Right cardiac atrium (tissue), 5 donors: ENCODE measurements at regions of chr1 and their contacts with region 1.

Region 1: GRCh38 chr1:151594143-151594625 is 17.7 kb upstream of the SNX27 start:
- DNase-seq: peak; percentile 68 to 91 (median 85)
- ATAC-seq: peak; percentile 50 to 73
- H3K4me3 ChIP-seq: no peak overlapping the region
- H3K27ac ChIP-seq: no peak overlapping the region
- H3K4me1 ChIP-seq: no peaks in the 10 kb centered on the region
- H3K27me3 ChIP-seq: no peaks in the 10 kb centered on the region

Region 2: DNA sequence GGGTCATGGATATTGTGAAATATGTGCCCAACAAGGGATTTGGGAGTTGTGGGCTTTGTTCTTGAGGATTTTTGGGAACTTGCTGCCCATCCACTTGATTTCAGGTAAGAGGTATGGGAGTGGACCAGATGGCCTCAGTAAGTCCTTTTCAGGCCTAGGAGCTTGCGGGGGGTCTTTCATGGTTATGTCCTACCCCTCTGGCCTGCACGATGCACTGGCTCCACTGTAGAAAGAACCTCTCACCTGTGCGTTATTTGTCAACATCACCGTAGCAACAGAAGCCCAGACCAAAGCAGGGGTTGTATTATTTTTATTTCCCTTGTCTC is 135.7 kb after region 1 on chr1:
- intact Hi-C with region 1: loop called (anchors 5 to 10 kb)
- DNase-seq: no peak
- ATAC-seq: no peak
- H3K4me3 ChIP-seq: no peak overlapping the region
- H3K27ac ChIP-seq: no peak overlapping the region
- H3K4me1 ChIP-seq: no peaks in the 10 kb centered on the region
- H3K27me3 ChIP-seq: no peaks in the 10 kb centered on the region

Region 3: GRCh38 chr1:151839457-151840405 is 245.5 kb after region 1 on chr1 and contains the start of gene C2CD4D:
- intact Hi-C with region 1: loop called in 2 of 4 experiments (anchors 10 kb)
- DNase-seq: peak; percentile 62 to 87 (median 85)
- ATAC-seq: peak; percentile 79 to 84
- H3K4me3 ChIP-seq: peak within 1 kb of the TSS; percentile 53
- H3K27ac ChIP-seq: no peak within 1 kb of the TSS
- H3K4me1 ChIP-seq: no peaks in the 10 kb centered on the region
- H3K27me3 ChIP-seq: no peaks in the 10 kb centered on the region
- total RNA-seq, gene C2CD4D: 0.11 to 0.21 (median 0.17) TPM in 3 of 4 donors, not detected in the other